OCI-LY7 (cell line): ENCODE measurements at regions of chr5 and their contacts with region 1.

Region 1: GRCh38 chr5:107389130-107389774 is 281.5 kb downstream of the EFNA5 start:
- DNase-seq: peak; percentile 96
- H3K4me3 ChIP-seq: peak overlapping the region; percentile 53
- H3K27ac ChIP-seq: peak overlapping the region; percentile 97
- H3K4me1 ChIP-seq: peaks cover 80% of the 10 kb centered on the region
- CTCF ChIP-seq: peak; percentile 54; the same call in 1 of the 2 replicates

Region 2: DNA sequence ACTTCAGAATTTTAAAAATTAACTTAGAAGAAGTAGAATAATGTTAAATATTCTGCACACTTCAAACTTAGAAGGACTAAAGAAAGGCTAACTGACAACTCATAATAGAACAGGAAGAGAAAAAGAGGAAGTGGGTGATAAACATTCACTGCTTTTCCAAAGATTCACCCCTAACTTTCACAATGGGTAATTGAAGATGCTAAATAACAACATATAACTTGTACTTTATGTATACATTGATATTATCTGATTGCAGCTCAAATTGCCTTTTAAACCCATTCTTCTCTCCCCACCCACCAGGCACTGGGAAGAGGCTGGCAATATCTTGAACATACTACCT is 95.1 kb before region 1 on chr5:
- CTCF ChIA-PET with region 1: no interaction called
- POLR2A ChIA-PET with region 1: interaction called, 9 read pairs
- intact Hi-C with region 1: loop called (anchors 5 kb)
- DNase-seq: peak; percentile 65
- H3K4me3 ChIP-seq: peak overlapping the region; percentile 2
- H3K27ac ChIP-seq: peak overlapping the region; percentile 49
- H3K4me1 ChIP-seq: peaks cover 38% of the 10 kb centered on the region
- CTCF ChIP-seq: no peak

Region 3: GRCh38 chr5:107402434-107403227 is 13.4 kb after region 1 on chr5:
- CTCF ChIA-PET with region 1: interaction called, 4 read pairs
- POLR2A ChIA-PET with region 1: interaction called, 24 read pairs
- intact Hi-C with region 1: no loop called
- DNase-seq: no peak
- H3K4me3 ChIP-seq: no peak overlapping the region
- H3K27ac ChIP-seq: no peak overlapping the region
- H3K4me1 ChIP-seq: peaks cover 12% of the 10 kb centered on the region
- CTCF ChIP-seq: no peak

Region 4: DNA sequence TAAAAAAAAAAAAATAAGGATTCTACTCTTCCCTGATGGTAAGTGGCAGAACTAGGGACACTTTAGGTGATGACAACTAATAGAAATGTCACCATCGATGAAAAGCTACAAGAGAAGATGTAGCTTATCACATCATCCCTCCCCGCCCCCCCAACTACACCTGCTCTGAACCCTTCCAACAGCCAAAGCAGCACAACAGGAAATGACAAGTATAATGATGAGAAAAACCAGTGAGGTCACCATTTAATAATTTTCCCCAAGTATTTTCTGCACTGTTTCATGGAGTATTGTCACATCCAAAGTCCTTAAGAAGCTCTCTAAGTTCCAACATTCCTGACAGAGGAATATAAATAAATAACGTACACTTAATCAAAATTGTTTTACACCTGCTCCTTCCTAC is 60.1 kb after region 1 on chr5:
- CTCF ChIA-PET with region 1: no interaction called
- POLR2A ChIA-PET with region 1: interaction called, 13 read pairs
- intact Hi-C with region 1: no loop called
- DNase-seq: peak; percentile 65
- H3K4me3 ChIP-seq: peak overlapping the region; percentile 35
- H3K27ac ChIP-seq: peak overlapping the region; percentile 63
- H3K4me1 ChIP-seq: peaks cover 48% of the 10 kb centered on the region
- CTCF ChIP-seq: no peak

Region 5: DNA sequence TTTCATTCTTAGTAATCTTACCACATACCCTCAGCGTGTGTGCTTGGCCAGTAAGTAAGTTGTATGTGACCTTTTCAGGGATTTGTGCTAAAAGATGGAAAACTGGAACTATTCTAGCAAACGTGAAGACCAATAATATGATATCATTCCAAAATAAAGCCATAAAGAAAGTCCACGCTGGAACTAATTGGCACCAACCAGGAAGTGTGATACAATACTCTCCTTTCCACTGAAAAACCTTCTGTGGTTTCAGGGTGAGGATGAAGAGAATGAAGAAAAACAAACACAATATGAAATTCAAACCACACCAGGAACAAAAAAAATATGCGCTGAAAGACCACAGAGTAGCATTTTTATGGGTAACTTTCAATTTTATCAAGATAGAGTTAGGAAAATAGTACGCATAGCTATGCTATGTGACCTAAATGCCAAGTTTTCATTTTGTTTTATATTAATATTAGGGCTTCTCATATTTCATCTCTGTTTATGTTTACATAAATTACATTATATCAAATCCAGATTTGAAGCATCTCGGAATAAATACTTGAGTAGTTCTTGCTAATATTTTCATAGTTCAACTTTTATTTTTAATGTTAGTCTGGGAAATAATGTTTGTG is 175.8 kb after region 1 on chr5:
- CTCF ChIA-PET with region 1: no interaction called
- POLR2A ChIA-PET with region 1: interaction called, 31 read pairs
- intact Hi-C with region 1: no loop called
- DNase-seq: no peak
- H3K4me3 ChIP-seq: no peak overlapping the region
- H3K27ac ChIP-seq: no peak overlapping the region
- H3K4me1 ChIP-seq: peaks cover 39% of the 10 kb centered on the region
- CTCF ChIP-seq: no peak

Region 6: DNA sequence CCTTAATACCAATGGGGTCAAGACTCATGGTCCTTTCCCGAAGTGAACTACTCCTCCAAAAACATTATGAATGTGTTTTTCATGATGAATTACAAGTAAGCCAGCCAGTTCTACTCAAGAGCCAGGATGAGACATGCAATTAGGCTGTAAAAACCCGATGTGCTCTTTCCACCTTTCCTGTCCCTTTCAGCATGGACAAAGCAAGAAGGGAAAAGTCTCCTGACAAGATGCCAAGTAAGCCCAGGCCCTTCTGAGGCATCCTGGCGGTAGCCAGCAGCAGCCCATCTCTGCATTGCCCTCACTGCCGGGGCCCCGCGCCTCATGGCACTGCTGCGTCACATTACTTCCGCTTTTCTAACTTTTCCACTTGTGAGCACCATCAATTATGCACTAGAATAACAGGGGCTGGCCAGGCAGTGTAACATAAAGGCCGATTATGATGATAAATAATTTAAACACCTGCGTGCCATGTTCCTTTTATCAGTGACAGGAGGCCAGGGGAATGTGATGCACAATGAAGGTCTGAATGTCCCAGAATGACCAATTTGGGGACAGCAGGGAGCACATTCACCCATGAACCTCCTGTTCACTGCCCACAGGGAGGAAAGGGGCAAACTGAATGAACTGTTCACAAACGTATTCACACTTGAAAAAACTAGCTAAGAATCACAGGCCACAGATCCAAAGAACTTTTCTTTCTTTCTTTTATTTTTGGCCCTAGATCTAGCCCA is 244.1 kb after region 1 on chr5:
- CTCF ChIA-PET with region 1: no interaction called
- POLR2A ChIA-PET with region 1: no interaction called
- intact Hi-C with region 1: no loop called
- DNase-seq: no peak
- H3K4me3 ChIP-seq: no peak overlapping the region
- H3K27ac ChIP-seq: no peak overlapping the region
- H3K4me1 ChIP-seq: peaks cover 7% of the 10 kb centered on the region
- CTCF ChIP-seq: no peak